Psoas muscle (tissue), 8 donors: ENCODE measurements at regions of chr2 and their contacts with region 1.

Region 1: DNA sequence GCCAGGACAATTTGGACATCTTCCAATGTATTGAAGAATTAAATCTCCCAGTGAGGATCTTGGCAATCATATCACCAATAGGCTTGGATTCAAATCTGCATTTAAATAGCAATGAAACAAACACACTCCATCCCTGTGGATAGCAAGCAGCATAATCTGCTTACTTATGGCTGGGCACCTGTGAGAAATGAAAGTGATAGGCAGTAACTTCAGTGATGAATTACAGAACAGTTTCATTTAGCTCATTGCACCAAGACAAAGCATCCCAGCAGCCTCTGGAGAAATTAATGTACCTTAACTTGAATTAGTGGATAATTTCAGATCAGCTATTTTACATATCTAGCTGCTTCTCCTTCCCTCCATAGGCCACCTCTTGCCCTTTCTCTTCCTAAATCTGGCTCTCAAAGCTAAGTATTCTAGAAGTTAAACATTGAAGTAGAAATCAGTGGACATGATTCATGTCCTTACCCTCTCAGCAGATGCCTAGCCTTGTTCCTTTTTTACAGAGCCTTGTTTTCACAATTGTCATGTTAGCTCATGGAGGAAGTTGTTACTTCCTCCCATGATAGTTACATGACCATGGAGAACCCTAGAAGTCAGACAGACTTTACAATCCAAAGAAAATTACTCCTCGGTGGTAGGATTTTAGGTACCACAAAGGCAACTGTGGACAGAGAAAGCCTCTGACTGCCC is 88.5 kb upstream of the TACR1 start:
- DNase-seq: no peak
- ATAC-seq: no peak
- H3K4me3 ChIP-seq: no peak overlapping the region
- H3K27ac ChIP-seq: no peak overlapping the region
- H3K4me1 ChIP-seq: no peaks in the 10 kb centered on the region
- H3K27me3 ChIP-seq: no peaks in the 10 kb centered on the region
- CTCF ChIP-seq: no peak

Region 2: DNA sequence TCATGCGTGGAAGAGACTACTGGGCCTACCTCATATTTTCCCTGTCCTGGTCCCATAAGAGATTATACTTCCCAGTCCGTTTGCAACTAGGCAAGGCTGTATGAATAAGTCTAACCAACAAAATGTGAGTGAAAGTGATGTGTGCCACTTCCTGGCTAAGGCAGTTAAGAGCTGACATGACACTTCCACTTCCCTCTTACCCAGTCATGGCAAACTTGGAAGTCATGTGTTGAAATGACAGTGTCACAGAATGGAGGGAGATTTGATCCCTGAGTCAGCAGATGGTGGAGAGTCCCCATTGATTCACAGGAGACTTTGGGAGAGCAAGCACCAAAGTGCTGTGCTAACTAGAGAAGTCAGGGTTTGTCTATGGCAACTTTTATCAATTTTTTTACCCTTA is 124.9 kb before region 1 on chr2:
- intact Hi-C with region 1: no loop called
- DNase-seq: no peak
- ATAC-seq: peak in 1 of 4 donors; percentile 40
- H3K4me3 ChIP-seq: no peak overlapping the region
- H3K27ac ChIP-seq: no peak overlapping the region
- H3K4me1 ChIP-seq: peaks cover 9% of the 10 kb centered on the region
- H3K27me3 ChIP-seq: no peaks in the 10 kb centered on the region
- CTCF ChIP-seq: no peak

Region 3: GRCh38 chr2:75320908-75321598 is 33.3 kb after region 1 on chr2:
- intact Hi-C with region 1: loop called in 1 of 2 experiments (anchors 1 kb)
- DNase-seq: no peak
- ATAC-seq: peak in 1 of 4 donors; percentile 90
- H3K4me3 ChIP-seq: no peak overlapping the region
- H3K27ac ChIP-seq: no peak overlapping the region
- H3K4me1 ChIP-seq: peaks cover 3% of the 10 kb centered on the region
- H3K27me3 ChIP-seq: no peaks in the 10 kb centered on the region
- CTCF ChIP-seq: no peak

Region 4: GRCh38 chr2:75751360-75751759 is 463.6 kb after region 1 on chr2:
- intact Hi-C with region 1: no loop called
- DNase-seq: no peak
- ATAC-seq: no peak
- H3K4me3 ChIP-seq: no peak overlapping the region
- H3K27ac ChIP-seq: no peak overlapping the region
- H3K4me1 ChIP-seq: no peaks in the 10 kb centered on the region
- H3K27me3 ChIP-seq: peaks cover 0 to 3% (median 0%) of the 10 kb centered on the region in 3 donors
- CTCF ChIP-seq: no peak